ENCODE measurements at regions of chr3 and their contacts with region 1.

Region 1: DNA sequence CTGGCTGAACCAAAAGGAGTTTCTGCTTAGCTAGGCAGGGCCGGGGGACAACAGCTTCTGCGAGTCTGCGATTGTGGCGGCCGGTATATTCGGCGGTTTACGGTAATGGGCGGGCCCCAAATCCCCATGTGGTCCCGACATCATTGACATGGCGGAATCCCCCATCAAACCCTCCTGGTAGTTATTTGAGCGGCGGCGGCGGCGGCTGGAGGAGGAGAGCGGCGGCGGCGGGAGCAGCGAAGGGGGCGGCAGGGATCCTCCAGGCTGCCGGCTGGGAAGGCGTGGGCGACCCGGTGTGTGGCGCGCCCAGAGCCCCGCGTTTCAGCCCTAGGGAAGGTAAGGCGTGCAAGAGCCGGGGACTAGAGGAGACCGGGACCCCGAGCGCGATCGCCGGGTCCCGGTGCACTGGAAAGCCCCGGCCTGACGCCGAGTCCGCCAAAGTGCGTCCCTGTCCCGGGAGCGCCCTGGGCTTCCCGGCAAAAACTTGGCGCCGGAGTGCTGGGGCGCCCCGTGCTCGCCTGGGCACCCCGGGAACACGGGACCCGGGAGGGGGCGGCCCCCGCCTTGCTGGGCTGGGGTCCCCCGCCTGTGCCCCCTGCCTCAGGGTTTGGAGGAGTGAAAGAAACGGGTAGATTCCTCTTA is at the start of gene FNDC3B:
- DNase-seq: peak; percentile 99
- H3K4me3 ChIP-seq: peak within 1 kb of the TSS; percentile 82 to 99 (median 98)
- H3K27ac ChIP-seq: peak within 1 kb of the TSS; percentile 96 to 100 (median 98)
- H3K4me1 ChIP-seq: peaks cover 27 to 42% (median 39%) of the 10 kb centered on the region in 4 donors
- H3K27me3 ChIP-seq: no peaks in the 10 kb centered on the region
- CTCF ChIP-seq: peak in 1 of 3 experiments; percentile 11
- EP300 ChIP-seq: no peak
- POLR2A ChIP-seq: peak; percentile 85
- total RNA-seq, gene FNDC3B: 59.8 to 72.6 (median 65.6) TPM

Region 2: GRCh38 chr3:172201136-172201869 is 161.7 kb after region 1 on chr3:
- intact Hi-C with region 1: loop called (anchors 10 kb)
- DNase-seq: no peak
- H3K4me3 ChIP-seq: peak overlapping the region in 1 of 4 donors; percentile 11
- H3K27ac ChIP-seq: peak overlapping the region; percentile 67 to 81 (median 77)
- H3K4me1 ChIP-seq: peaks cover 48 to 56% (median 53%) of the 10 kb centered on the region in 4 donors
- H3K27me3 ChIP-seq: no peaks in the 10 kb centered on the region
- CTCF ChIP-seq: no peak
- EP300 ChIP-seq: no peak
- POLR2A ChIP-seq: no peak

Region 3: DNA sequence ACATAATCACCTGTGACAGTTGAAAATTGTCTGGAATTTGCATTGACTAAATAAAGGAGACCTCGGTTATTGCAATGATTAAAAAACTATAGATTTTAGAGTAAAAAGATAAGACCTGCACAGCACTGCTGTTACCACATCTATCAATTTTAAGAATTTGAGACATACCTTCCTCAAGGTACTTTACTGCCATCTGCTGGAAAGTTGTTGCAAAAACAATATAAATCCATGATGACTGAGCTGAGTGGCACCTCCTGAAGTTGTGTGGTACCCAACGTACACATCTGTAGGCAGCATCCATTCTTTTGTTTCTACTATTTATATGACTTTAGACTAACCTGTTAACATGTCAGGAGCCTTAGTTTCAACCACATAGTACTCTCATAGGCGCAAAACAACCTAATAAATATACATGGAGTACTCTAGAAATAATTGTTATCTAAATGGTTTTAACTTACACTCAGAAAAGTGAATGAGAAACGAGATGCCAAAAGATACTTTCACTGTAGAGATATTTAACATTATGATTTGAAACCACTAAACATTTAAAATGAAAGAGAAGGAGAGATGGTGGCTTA is 302.0 kb after region 1 on chr3:
- intact Hi-C with region 1: loop called (anchors 5 kb)
- DNase-seq: no peak
- H3K4me3 ChIP-seq: no peak overlapping the region
- H3K27ac ChIP-seq: no peak overlapping the region
- H3K4me1 ChIP-seq: peaks cover 0 to 10% (median 0%) of the 10 kb centered on the region in 4 donors
- H3K27me3 ChIP-seq: no peaks in the 10 kb centered on the region
- CTCF ChIP-seq: peak; percentile 68 to 69 (median 68)
- EP300 ChIP-seq: no peak
- POLR2A ChIP-seq: no peak

Measured in esophagus muscularis mucosa (tissue), 4 donors.